Activated B cell treated with CpG ODN at 0.5 μM for 24 hours (primary cell): ENCODE measurements at regions of chr13 and their contacts with region 1.

Region 1: GRCh38 chr13:110644892-110645521 is 29.7 kb downstream of the NAXD start:
- DNase-seq: peak; percentile 42
- ATAC-seq: peak; percentile 92
- H3K4me3 Mint-ChIP-seq: no peak overlapping the region
- H3K27ac Mint-ChIP-seq: no peak overlapping the region
- H3K4me1 Mint-ChIP-seq: peaks cover 31% of the 10 kb centered on the region
- H3K27me3 Mint-ChIP-seq: no peaks in the 10 kb centered on the region
- CTCF ChIP-seq: no peak

Region 2: DNA sequence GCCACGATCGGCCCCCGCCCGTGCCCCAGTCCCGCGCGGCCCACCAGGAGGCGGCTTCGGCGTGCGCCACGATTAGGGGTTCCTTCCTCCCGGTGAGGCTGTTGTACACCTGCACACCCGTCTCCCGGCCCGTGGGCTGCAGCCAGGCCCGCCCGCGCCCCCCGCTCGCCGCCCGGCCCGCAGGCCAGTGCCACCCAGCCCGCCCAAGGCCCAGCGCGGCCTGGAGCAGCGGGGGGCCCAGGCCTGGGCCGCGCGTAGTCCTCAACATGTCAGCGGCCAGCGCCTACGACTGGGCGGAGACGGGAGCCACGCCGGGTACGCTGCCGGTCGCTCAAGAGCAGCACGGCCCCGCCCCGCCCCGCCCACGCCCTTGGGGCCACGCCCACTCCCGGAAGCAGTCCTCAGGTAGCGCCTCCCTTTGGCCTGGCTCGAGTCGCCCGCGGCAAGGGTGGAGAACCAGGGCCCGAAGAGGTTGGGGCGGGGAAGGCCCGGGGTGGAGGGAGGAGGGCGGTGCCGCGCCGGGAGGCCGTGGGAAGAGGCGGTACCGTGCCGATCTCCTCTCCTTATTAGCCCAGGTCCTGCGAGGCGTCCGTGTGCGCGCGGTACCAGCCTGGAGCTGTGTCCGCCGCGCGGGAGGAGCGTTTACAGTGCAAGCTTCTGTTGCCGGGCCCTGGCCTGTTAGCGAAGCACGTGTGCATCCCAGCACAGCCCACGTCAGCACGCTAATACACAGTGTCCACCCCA is 61.0 kb after region 1 on chr13 and contains the start of gene CARS2:
- CTCF ChIA-PET with region 1: interaction called, 9 read pairs
- POLR2A ChIA-PET with region 1: no interaction called
- intact Hi-C with region 1: loop called (anchors 1 kb)
- DNase-seq: peak; percentile 82
- ATAC-seq: peak; percentile 95
- H3K4me3 Mint-ChIP-seq: peak within 1 kb of the TSS; percentile 94
- H3K27ac Mint-ChIP-seq: peak within 1 kb of the TSS; percentile 92
- H3K4me1 Mint-ChIP-seq: peaks cover 42% of the 10 kb centered on the region
- H3K27me3 Mint-ChIP-seq: no peaks in the 10 kb centered on the region
- CTCF ChIP-seq: no peak
- total RNA-seq, gene CARS2: 90.1 and 115 TPM in 2 replicates

Region 3: GRCh38 chr13:110925023-110925612 is 280.1 kb after region 1 on chr13:
- CTCF ChIA-PET with region 1: interaction called, 6 read pairs
- POLR2A ChIA-PET with region 1: no interaction called
- intact Hi-C with region 1: loop called (anchors 1 kb)
- DNase-seq: no peak
- ATAC-seq: peak; percentile 28
- H3K4me3 Mint-ChIP-seq: no peak overlapping the region
- H3K27ac Mint-ChIP-seq: no peak overlapping the region
- H3K4me1 Mint-ChIP-seq: peaks cover 21% of the 10 kb centered on the region
- H3K27me3 Mint-ChIP-seq: peaks cover 13% of the 10 kb centered on the region
- CTCF ChIP-seq: no peak